ENCODE measurements at regions of chr22 and their contacts with region 1.

Region 1: GRCh38 chr22:38069372-38070249 is 12.4 kb downstream of the PICK1 start:
- DNase-seq: peak; percentile 85 to 97
- ATAC-seq: peak; percentile 72 to 74
- H3K4me3 ChIP-seq: peak overlapping the region; percentile 42 to 57 (median 48)
- H3K27ac ChIP-seq: peak overlapping the region; percentile 97 to 100 (median 98)
- H3K4me1 ChIP-seq: peaks cover 51 to 69% of the 10 kb centered on the region in 2 donors
- H3K27me3 ChIP-seq: no peaks in the 10 kb centered on the region
- CTCF ChIP-seq: peak in 4 of 5 experiments; percentile 72 to 82 (median 77)
- POLR2A ChIP-seq: peak; percentile 58 to 65

Region 2: DNA sequence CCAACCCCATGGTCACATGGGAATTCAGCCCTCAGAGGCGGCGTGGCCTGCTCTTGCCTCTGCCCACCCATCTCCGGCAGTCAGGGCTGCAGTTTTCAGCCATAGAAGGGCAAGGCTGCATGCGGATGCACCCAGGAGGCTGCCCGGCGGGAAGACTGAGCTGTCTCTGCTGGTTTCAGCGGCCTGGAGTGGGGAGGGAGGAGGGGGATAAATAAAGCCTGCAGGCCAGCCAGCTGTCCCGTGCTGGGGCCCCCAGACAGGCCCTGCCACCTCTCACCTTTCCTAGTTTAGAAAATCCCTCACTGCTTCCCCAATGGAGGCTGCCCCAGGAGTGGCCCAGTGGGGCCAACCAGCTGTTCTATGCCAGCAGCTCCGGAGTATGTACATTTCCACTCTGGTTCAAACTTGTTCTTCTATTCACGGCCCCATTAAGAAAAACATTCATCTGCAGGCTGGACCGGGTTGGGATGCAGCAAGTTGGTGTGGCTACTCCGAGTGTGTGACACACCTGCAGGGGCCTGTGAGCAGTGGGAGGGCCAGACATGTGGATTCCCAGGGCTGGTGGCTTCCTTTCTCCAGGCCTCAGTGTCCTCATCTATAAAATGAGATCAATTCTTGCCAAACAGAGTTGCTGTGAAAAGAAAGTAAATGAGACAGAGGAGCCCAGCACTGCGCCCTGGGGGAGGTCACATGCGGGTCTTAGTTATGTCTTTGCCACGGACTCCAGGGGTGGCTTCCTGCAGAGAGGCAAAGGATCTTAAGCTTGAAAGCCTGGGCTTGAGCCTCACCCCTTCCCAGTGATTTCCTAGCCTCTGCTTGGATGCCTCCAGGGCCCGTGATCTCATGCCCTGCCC is 158.5 kb before region 1 on chr22:
- in situ Hi-C with region 1: no loop called
- intact Hi-C with region 1: no loop called
- DNase-seq: no peak
- ATAC-seq: no peak
- H3K4me3 ChIP-seq: no peak overlapping the region
- H3K27ac ChIP-seq: peak overlapping the region in 2 of 4 donors; percentile 26 to 61
- H3K4me1 ChIP-seq: peaks cover 0 to 8% of the 10 kb centered on the region in 2 donors
- H3K27me3 ChIP-seq: no peaks in the 10 kb centered on the region
- CTCF ChIP-seq: no peak
- POLR2A ChIP-seq: no peak

Region 3: GRCh38 chr22:38034274-38034882 is 35.2 kb before region 1 on chr22:
- in situ Hi-C with region 1: no loop called
- intact Hi-C with region 1: no loop called
- DNase-seq: peak in 1 of 2 donors; percentile 40
- ATAC-seq: peak; percentile 46 to 57
- H3K4me3 ChIP-seq: no peak overlapping the region
- H3K27ac ChIP-seq: peak overlapping the region; percentile 10 to 57 (median 42)
- H3K4me1 ChIP-seq: peaks cover 8 to 16% of the 10 kb centered on the region in 2 donors
- H3K27me3 ChIP-seq: no peaks in the 10 kb centered on the region
- CTCF ChIP-seq: no peak
- POLR2A ChIP-seq: no peak

Region 4: GRCh38 chr22:38104084-38104483 is 34.5 kb after region 1 on chr22:
- in situ Hi-C with region 1: no loop called
- intact Hi-C with region 1: loop called (anchors 1 kb)
- DNase-seq: peak in 1 of 2 donors; percentile 54
- ATAC-seq: peak; percentile 64 to 89
- H3K4me3 ChIP-seq: no peak overlapping the region
- H3K27ac ChIP-seq: no peak overlapping the region
- H3K4me1 ChIP-seq: no peaks in the 10 kb centered on the region
- H3K27me3 ChIP-seq: no peaks in the 10 kb centered on the region
- CTCF ChIP-seq: peak; percentile 39 to 64 (median 61)
- POLR2A ChIP-seq: no peak

Region 5: DNA sequence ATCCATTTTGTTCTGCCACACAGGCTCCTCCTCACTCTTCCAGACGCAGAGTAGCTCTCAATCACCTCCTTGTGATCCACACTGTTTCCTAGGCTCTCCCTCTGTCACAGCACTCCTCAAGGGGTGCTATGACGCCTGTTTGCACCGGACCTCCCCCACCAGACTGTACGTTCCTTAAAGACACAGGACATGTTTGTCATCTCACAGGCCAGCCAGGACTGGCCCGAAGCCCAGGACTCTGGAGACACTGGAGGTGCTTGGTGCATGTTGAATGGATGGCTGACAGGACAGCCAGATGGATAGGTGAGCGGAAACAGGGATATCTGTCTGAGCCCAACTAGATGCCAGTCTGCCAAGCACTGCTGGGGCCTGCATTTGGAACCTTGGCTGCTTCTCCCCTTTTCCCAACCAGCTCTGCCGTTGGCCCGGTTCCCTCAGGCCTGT is 98.4 kb after region 1 on chr22:
- in situ Hi-C with region 1: no loop called
- intact Hi-C with region 1: loop called (anchors 2 kb)
- DNase-seq: peak; percentile 59 to 73
- ATAC-seq: peak; percentile 52 to 62
- H3K4me3 ChIP-seq: peak overlapping the region in 1 of 4 donors; percentile 6
- H3K27ac ChIP-seq: peak overlapping the region; percentile 74 to 97 (median 92)
- H3K4me1 ChIP-seq: peaks cover 37 to 49% of the 10 kb centered on the region in 2 donors
- H3K27me3 ChIP-seq: no peaks in the 10 kb centered on the region
- CTCF ChIP-seq: no peak
- POLR2A ChIP-seq: peak in 1 of 2 donors; percentile 57

Region 6: DNA sequence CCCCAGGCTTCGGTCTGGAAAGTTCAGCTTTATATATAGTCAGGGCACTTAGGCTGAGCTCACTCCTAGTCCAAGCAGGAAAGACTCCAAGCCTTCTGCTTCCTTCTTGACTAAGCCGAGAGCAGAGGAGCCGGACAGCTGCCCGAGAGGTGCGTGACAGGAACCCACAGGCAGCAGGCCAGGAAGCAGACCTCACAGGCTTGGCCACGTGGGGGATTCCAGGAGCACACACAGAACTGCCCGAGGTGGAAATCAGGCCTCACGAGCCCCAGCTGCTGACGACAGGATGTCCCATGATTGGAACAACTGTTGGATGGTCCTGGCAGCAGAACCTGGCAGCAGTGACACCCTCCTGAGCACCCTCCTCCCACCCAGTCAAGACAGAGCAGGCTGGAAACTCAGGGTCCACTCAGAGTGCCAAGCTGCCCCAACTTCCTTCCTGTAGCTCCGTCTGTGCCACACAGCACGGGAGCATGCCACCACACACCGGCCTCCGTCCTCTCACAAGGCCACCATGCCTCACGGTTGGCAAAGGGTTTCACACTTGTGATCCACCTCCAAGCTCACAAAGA is 106.6 kb after region 1 on chr22:
- in situ Hi-C with region 1: no loop called
- intact Hi-C with region 1: loop called (anchors 2 kb)
- DNase-seq: peak; percentile 97 to 99
- ATAC-seq: peak; percentile 53 to 66
- H3K4me3 ChIP-seq: no peak overlapping the region
- H3K27ac ChIP-seq: peak overlapping the region; percentile 93 to 97 (median 96)
- H3K4me1 ChIP-seq: peaks cover 68 to 76% of the 10 kb centered on the region in 2 donors
- H3K27me3 ChIP-seq: no peaks in the 10 kb centered on the region
- CTCF ChIP-seq: peak in 1 of 5 experiments; percentile 27
- POLR2A ChIP-seq: peak; percentile 73 to 90